ENCODE measurements at regions of chr6 and their contacts with region 1.

Region 1: GRCh38 chr6:43496370-43497128 is 13.6 kb downstream of the LRRC73 start:
- DNase-seq: peak; percentile 62
- ATAC-seq: peak; percentile 70
- H3K4me3 ChIP-seq: no peak overlapping the region
- H3K27ac ChIP-seq: peak overlapping the region; percentile 61
- H3K4me1 ChIP-seq: peaks cover 46% of the 10 kb centered on the region
- H3K27me3 ChIP-seq: no peaks in the 10 kb centered on the region
- CTCF ChIP-seq: peak; percentile 77
- POLR2A ChIP-seq: no peak
- RAD21 ChIP-seq: peak; percentile 85

Region 2: DNA sequence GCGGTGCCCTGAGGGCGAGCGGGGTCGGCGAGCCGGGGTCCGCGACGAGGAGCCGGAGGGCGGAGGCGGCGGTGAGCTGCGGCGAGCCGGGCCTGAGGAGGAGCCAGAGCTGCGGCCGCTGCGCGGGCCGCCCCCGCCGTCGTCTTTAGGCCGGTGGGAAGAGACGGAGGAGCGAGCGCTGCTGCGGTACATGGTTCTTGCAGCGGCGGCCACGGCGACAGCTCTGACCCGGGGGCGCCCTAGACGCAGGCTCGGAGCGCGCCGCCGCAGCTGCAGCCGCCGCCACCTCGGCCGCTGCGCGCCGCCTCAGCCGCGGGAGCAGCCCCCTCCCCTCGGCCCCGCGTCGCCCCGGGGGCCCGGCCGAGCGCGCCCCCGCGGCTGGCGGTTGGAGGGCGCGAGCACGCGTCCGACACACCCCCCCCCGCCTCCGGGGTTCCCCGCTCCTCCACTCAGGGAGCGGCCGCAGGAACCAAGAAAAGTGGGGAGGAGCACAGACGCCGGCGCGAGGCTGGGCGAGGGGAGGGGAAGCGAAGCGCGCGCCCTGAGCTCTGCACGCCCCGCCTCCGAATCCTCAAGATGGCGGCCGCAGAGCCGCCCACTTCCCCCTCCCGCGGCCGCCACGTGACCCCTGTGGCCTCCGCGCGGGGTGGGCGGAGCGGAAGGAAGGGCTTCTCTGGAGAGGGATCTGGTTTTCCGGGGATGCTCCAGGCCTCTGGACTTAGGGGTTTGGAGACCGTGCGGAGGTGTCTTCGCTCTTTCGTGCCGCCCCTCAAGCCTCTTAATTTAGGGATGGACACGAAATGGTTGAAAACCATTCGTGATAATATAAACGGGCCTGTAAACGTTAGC is 127.2 kb before region 1 on chr6 and contains the start of gene ZNF318:
- CTCF ChIA-PET with region 1: no interaction called
- POLR2A ChIA-PET with region 1: no interaction called
- dilution Hi-C with region 1: no loop called
- in situ Hi-C with region 1: no loop called
- intact Hi-C with region 1: loop called (anchors 5 kb)
- DNase-seq: peak; percentile 96
- ATAC-seq: peak; percentile 97
- H3K4me3 ChIP-seq: peak within 1 kb of the TSS; percentile 69
- H3K27ac ChIP-seq: peak within 1 kb of the TSS; percentile 83
- H3K4me1 ChIP-seq: peaks cover 3% of the 10 kb centered on the region; the same call in 1 of the 2 replicates
- H3K27me3 ChIP-seq: no peaks in the 10 kb centered on the region
- CTCF ChIP-seq: no peak
- POLR2A ChIP-seq: peak; percentile 55; the same call in 1 of the 2 replicates
- RAD21 ChIP-seq: no peak
- total RNA-seq, gene ZNF318: 5.6 and 5.7 TPM in 2 replicates

Region 3: GRCh38 chr6:43454696-43455530 is 41.6 kb before region 1 on chr6:
- CTCF ChIA-PET with region 1: interaction called, 3 read pairs
- POLR2A ChIA-PET with region 1: no interaction called
- dilution Hi-C with region 1: no loop called
- in situ Hi-C with region 1: loop called (anchors 5 kb)
- intact Hi-C with region 1: loop called (anchors 1 kb)
- DNase-seq: peak; percentile 81
- ATAC-seq: peak; percentile 98
- H3K4me3 ChIP-seq: peak overlapping the region; percentile 53
- H3K27ac ChIP-seq: no peak overlapping the region; the same call in 1 of the 2 replicates
- H3K4me1 ChIP-seq: peaks cover 2% of the 10 kb centered on the region; the same call in 1 of the 2 replicates
- H3K27me3 ChIP-seq: peaks cover 15% of the 10 kb centered on the region
- CTCF ChIP-seq: no peak
- POLR2A ChIP-seq: no peak
- RAD21 ChIP-seq: no peak

Region 4: GRCh38 chr6:43477235-43478007 is 19.1 kb before region 1 on chr6 and contains the start of gene TJAP1:
- CTCF ChIA-PET with region 1: interaction called, 3 read pairs
- POLR2A ChIA-PET with region 1: interaction called, 11 read pairs
- dilution Hi-C with region 1: no loop called
- in situ Hi-C with region 1: no loop called
- intact Hi-C with region 1: loop called (anchors 1 kb)
- DNase-seq: peak; percentile 78
- ATAC-seq: peak; percentile 100
- H3K4me3 ChIP-seq: peak within 1 kb of the TSS; percentile 66
- H3K27ac ChIP-seq: peak within 1 kb of the TSS; percentile 83
- H3K4me1 ChIP-seq: peaks cover 7% of the 10 kb centered on the region
- H3K27me3 ChIP-seq: no peaks in the 10 kb centered on the region
- CTCF ChIP-seq: no peak
- POLR2A ChIP-seq: peak; percentile 94
- RAD21 ChIP-seq: no peak
- total RNA-seq, gene TJAP1: 12.2 and 12.5 TPM in 2 replicates